GM12878 (cell line): ENCODE measurements at regions of chr3 and their contacts with region 1.

Region 1: DNA sequence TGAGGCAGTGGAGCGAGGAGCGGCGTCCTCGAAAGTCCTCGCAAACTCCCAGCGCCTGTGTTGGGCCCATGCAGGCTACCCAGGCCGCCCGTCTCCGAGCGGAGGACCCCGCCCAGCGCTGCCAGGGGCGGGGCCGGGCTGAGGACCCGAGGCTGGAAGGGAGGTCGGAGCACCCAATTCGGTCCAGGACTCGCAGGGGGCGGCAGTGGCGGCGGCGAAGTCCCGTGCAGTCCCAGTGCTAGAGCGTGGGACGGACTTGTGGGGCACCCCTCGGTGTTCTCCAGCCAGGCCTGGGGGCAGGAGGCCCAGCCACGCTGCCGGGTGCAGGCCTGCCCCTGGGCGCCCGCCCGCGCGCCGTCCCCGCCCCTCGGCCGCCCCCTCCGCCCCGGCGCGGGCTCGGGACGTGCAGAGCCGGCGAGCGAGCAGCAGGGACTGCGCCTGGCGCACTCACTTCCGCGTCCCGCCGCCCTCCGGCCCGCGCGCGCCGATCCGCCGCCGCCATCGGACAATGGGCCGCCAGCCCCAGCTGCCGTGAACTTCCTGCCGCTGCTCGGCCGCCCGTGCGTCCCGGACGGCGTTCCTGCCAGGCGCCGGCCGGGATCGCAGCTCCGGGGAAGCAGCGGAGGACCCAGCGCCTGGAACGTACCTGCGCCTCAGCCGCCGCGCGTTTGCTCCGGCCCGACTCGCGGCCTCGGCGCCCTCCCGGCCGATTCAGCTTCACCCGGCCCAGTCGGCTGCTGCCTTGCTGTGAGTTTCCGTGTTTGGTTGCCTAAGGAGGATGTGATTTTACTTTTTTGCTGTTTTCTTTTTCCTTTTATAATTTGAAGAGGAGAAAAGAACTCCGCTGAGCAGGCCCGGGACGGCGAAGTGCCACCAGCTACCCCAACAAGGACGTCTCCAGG is 592 bp upstream of the LIMD1 start:
- DNase-seq: no peak
- ATAC-seq: peak; percentile 81
- H3K4me3 ChIP-seq: peak overlapping the region; percentile 81
- H3K27ac ChIP-seq: peak overlapping the region; percentile 89
- H3K4me1 ChIP-seq: peaks cover 18% of the 10 kb centered on the region
- H3K27me3 ChIP-seq: no peaks in the 10 kb centered on the region
- CTCF ChIP-seq: no peak
- EP300 ChIP-seq: no peak
- POLR2A ChIP-seq: peak; percentile 85
- RAD21 ChIP-seq: no peak

Region 2: GRCh38 chr3:45507820-45508317 is 86.1 kb before region 1 on chr3:
- CTCF ChIA-PET with region 1: interaction called, 7 read pairs
- POLR2A ChIA-PET with region 1: interaction called, 8 read pairs
- RAD21 ChIA-PET with region 1: interaction called, 3 read pairs
- SMC1A ChIA-PET with region 1: interaction called, 10 read pairs
- in situ Hi-C with region 1: no loop called
- intact Hi-C with region 1: no loop called
- DNase-seq: no peak
- ATAC-seq: no peak
- H3K4me3 ChIP-seq: no peak overlapping the region
- H3K27ac ChIP-seq: no peak overlapping the region
- H3K4me1 ChIP-seq: no peaks in the 10 kb centered on the region
- H3K27me3 ChIP-seq: no peaks in the 10 kb centered on the region
- CTCF ChIP-seq: no peak
- EP300 ChIP-seq: no peak
- POLR2A ChIP-seq: no peak
- RAD21 ChIP-seq: no peak

Region 3: GRCh38 chr3:45546716-45547701 is 47.0 kb before region 1 on chr3:
- CTCF ChIA-PET with region 1: interaction called, 11 read pairs
- POLR2A ChIA-PET with region 1: no interaction called
- RAD21 ChIA-PET with region 1: interaction called, 5 read pairs
- SMC1A ChIA-PET with region 1: interaction called, 10 read pairs
- in situ Hi-C with region 1: no loop called
- intact Hi-C with region 1: loop called (anchors 5 kb)
- DNase-seq: no peak
- ATAC-seq: peak; percentile 39; the same call in 2 of the 3 replicates
- H3K4me3 ChIP-seq: no peak overlapping the region
- H3K27ac ChIP-seq: no peak overlapping the region
- H3K4me1 ChIP-seq: peaks cover 6% of the 10 kb centered on the region; the same call in 1 of the 2 replicates
- H3K27me3 ChIP-seq: no peaks in the 10 kb centered on the region
- CTCF ChIP-seq: peak in 2 of 3 experiments; percentile 45 to 48; a peak in 3 of 6 replicates
- EP300 ChIP-seq: no peak
- POLR2A ChIP-seq: no peak
- RAD21 ChIP-seq: 0 out of 2 replicates have a peak, but pooled peaks have one; percentile 17

Region 4: DNA sequence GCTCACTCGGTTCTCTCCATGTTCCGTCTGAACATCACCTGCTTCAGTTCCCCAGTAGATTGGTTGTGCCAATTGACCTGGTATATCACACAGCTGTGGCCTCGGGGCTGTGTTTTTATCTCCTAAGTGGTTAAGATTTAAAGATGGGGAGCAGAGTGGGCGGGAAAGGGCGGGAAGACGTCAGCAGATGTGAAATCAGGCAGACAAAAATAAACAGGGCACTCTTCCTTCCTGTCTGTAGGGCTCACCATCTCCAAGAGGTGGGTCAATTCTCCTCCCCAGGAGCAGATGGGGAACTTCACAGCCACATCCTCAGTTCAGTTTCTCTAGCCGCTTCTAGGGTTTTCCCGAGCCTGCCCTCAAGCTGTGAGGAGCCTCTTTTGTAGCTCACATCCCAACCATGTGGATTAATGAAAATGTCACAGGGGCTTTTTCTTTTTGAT is 26.2 kb before region 1 on chr3:
- CTCF ChIA-PET with region 1: interaction called, 9 read pairs
- POLR2A ChIA-PET with region 1: interaction called, 12 read pairs
- RAD21 ChIA-PET with region 1: interaction called, 7 read pairs
- SMC1A ChIA-PET with region 1: interaction called, 13 read pairs
- in situ Hi-C with region 1: no loop called
- intact Hi-C with region 1: loop called (anchors 2 kb)
- DNase-seq: peak; percentile 84
- ATAC-seq: peak; percentile 83
- H3K4me3 ChIP-seq: no peak overlapping the region
- H3K27ac ChIP-seq: peak overlapping the region; percentile 66
- H3K4me1 ChIP-seq: peaks cover 54% of the 10 kb centered on the region
- H3K27me3 ChIP-seq: no peaks in the 10 kb centered on the region
- CTCF ChIP-seq: no peak
- EP300 ChIP-seq: peak; percentile 32 to 76; a peak in 2 of 4 replicates
- POLR2A ChIP-seq: no peak; the same call in 1 of the 2 replicates
- RAD21 ChIP-seq: no peak

Region 5: GRCh38 chr3:45623393-45623792 is 29.4 kb after region 1 on chr3:
- CTCF ChIA-PET with region 1: no interaction called
- POLR2A ChIA-PET with region 1: interaction called, 10 read pairs
- RAD21 ChIA-PET with region 1: interaction called, 4 read pairs
- SMC1A ChIA-PET with region 1: interaction called, 3 read pairs
- in situ Hi-C with region 1: no loop called
- intact Hi-C with region 1: no loop called
- DNase-seq: no peak
- ATAC-seq: no peak
- H3K4me3 ChIP-seq: no peak overlapping the region
- H3K27ac ChIP-seq: no peak overlapping the region
- H3K4me1 ChIP-seq: no peaks in the 10 kb centered on the region; the same call in 1 of the 2 replicates
- H3K27me3 ChIP-seq: no peaks in the 10 kb centered on the region
- CTCF ChIP-seq: no peak
- EP300 ChIP-seq: no peak
- POLR2A ChIP-seq: no peak; the same call in 1 of the 2 replicates
- RAD21 ChIP-seq: no peak

Region 6: DNA sequence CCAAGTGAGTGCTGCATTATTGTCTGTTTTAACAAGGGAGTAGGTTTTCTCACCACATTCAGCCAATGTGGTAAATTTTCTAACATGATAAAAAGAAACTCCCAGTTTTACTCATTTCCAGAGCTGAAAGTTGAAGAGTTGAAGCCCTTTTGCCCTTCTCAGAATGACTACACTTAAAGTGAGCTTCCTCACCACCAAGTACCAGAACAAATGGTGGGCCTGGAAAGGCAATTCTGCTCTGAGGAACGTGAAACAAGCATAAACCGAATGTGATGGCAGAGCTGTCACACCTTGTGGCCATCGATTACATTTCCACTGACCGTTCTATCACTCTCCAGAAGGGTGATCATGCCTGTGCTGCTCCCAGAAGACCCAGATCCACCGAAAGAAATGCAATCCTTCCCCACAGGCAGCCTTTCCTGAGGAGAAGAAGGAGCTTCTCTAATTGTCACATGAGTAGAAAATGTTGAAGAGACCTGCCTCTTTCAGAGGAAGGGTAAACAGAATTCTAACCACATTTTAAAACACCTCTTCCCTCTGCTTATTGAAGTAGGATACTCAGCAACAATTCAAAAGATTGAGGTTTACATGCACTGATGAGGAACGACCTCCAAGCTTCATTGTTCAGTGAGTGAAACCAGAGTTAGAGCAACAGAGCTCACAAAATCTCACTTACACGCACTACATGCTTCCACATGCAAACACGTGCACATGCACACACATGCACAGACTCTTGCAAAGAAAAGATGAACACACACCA is 271.0 kb after region 1 on chr3:
- CTCF ChIA-PET with region 1: no interaction called
- POLR2A ChIA-PET with region 1: no interaction called
- RAD21 ChIA-PET with region 1: no interaction called
- SMC1A ChIA-PET with region 1: no interaction called
- in situ Hi-C with region 1: no loop called
- intact Hi-C with region 1: loop called (anchors 10 kb)
- DNase-seq: peak; percentile 71
- ATAC-seq: peak; percentile 84
- H3K4me3 ChIP-seq: no peak overlapping the region
- H3K27ac ChIP-seq: peak overlapping the region; percentile 90
- H3K4me1 ChIP-seq: peaks cover 71% of the 10 kb centered on the region
- H3K27me3 ChIP-seq: no peaks in the 10 kb centered on the region; a peak in 2 of 4 replicates
- CTCF ChIP-seq: no peak
- EP300 ChIP-seq: peak; percentile 99
- POLR2A ChIP-seq: no peak; the same call in 1 of the 2 replicates
- RAD21 ChIP-seq: peak; percentile 35